ENCODE measurements at regions of chr20 and their contacts with region 1.

Region 1: DNA sequence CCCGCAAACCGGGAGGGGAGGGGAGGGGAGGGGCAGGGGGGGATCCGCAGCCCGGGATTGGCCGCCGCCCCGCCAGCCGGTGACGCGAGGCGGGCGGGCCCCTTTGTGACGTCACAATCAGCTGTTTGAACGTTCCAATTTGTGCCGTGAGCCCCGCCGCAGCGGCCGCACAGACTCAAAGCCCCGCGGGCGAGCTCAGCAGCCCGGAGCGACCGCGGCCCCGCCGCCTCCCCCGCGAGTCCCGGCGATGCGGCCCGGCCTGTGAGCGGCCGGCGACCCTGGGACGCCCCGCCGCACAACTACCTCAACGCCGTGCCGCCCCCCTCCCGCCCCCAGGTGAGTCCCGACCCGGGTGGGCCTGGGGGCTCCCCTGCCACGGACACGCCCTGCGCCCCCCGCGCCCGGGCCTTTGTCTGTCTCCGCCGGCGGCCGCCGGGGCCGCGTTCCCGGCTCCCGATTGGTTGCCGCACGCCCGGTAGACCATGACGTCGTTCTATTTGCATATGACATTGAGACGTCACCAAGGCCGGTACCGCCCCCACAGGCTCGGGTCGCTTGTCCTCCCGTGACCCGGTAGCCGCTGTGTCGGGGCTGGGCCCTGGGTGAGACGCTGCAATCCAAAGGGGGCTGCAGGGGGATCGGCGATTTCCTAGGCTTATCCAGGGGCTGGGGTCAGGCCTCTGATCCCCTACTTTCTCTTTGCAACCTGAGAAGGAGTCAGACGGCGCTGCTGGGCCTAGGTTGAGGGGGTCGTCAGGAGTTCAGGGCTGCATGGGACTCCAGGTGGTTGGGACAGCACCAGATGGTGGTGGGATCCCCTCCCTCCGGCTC is at the start of gene TP53INP2:
- DNase-seq: peak; percentile 93 to 95 (median 93)
- H3K4me3 ChIP-seq: peak within 1 kb of the TSS; percentile 49 to 82 (median 76)
- H3K4me3 Mint-ChIP-seq: peak within 1 kb of the TSS; percentile 95 to 98
- H3K27ac ChIP-seq: peak within 1 kb of the TSS; percentile 30 to 94
- H3K27ac Mint-ChIP-seq: peak within 1 kb of the TSS; percentile 93 to 97 (median 95)
- H3K4me1 ChIP-seq: peaks cover 29 to 38% of the 10 kb centered on the region in 2 donors
- H3K4me1 Mint-ChIP-seq: peaks cover 40% of the 10 kb centered on the region
- H3K27me3 ChIP-seq: peaks cover 0 to 22% of the 10 kb centered on the region in 2 donors
- H3K27me3 Mint-ChIP-seq: peaks cover 20 to 28% (median 25%) of the 10 kb centered on the region in 3 donors
- CTCF ChIP-seq: no peak
- polyA plus RNA-seq, gene TP53INP2: 0.46 to 20.6 (median 0.66) TPM

Region 2: GRCh38 chr20:34538671-34539123 is 165.7 kb before region 1 on chr20:
- intact Hi-C with region 1: loop called in 1 of 2 experiments (anchors 5 kb)
- DNase-seq: peak in 2 of 3 donors; percentile 37 to 56
- H3K4me3 ChIP-seq: no peak overlapping the region
- H3K4me3 Mint-ChIP-seq: no peak overlapping the region
- H3K27ac ChIP-seq: no peak overlapping the region
- H3K27ac Mint-ChIP-seq: peak overlapping the region in 5 of 7 donors; percentile 21 to 67 (median 33)
- H3K4me1 ChIP-seq: no peaks in the 10 kb centered on the region
- H3K4me1 Mint-ChIP-seq: no peaks in the 10 kb centered on the region
- H3K27me3 ChIP-seq: no peaks in the 10 kb centered on the region
- H3K27me3 Mint-ChIP-seq: no peaks in the 10 kb centered on the region
- CTCF ChIP-seq: peak; percentile 84

Region 3: DNA sequence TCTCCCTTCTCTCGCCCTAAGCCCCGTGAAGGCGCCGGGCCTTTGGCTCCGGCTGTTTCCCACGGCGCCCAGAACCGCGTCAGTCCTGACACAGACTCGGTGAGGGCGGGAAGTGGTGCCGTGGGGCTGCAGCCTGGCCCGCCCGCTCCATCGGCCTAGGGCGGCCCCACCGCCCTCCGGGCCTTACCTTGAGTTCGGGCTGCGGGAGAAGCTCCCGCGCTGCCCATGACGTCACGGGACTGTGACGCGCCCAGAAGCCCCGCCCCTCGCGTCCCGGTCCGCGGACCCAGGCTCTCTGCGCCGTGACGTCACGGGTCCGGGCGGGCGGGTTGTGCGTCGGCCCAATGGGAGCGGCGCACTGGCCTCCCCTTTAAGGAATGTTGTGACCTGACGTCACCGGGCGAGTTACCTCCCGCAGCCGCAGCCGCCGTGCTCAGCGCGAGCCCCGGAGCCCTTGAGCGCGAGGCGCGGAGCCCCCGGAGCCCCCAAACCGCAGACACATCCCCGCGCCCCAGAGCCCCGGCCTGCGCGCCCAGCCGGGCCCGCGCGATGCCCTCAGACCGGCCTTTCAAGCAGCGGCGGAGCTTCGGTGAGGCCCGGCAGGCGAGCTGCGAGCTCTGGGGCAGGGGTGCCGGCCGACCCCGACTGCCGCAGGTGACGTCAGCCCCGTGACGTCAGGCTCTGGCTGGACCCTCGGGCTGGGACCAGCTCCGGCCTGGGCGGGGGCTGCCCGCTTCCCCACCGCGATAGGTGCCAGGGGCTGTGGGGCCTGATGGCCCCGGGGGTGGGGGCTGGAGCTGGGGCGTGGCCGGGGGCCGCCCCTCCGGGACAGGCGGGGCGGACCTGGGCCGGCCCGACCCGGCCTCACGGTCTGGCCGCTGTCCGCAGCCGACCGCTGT is 145.8 kb before region 1 on chr20 and contains the start of gene MAP1LC3A:
- intact Hi-C with region 1: loop called (anchors 2 to 5 kb)
- DNase-seq: peak; percentile 95 to 98 (median 97)
- H3K4me3 ChIP-seq: peak within 1 kb of the TSS; percentile 75 to 85 (median 83)
- H3K4me3 Mint-ChIP-seq: peak within 1 kb of the TSS; percentile 80 to 92
- H3K27ac ChIP-seq: peak within 1 kb of the TSS in 1 of 2 donors; percentile 78
- H3K27ac Mint-ChIP-seq: peak within 1 kb of the TSS in 6 of 7 donors; percentile 83 to 94 (median 90)
- H3K4me1 ChIP-seq: peaks cover 7 to 16% of the 10 kb centered on the region in 2 donors
- H3K4me1 Mint-ChIP-seq: peaks cover 5% of the 10 kb centered on the region
- H3K27me3 ChIP-seq: no peaks in the 10 kb centered on the region
- H3K27me3 Mint-ChIP-seq: peaks cover 0 to 2% (median 0%) of the 10 kb centered on the region in 3 donors
- CTCF ChIP-seq: no peak
- polyA plus RNA-seq, gene MAP1LC3A: 2.5 to 7.7 (median 2.6) TPM

Region 4: GRCh38 chr20:34570859-34571306 is 133.5 kb before region 1 on chr20:
- intact Hi-C with region 1: no loop called
- DNase-seq: peak; percentile 12 to 79 (median 36)
- H3K4me3 ChIP-seq: no peak overlapping the region
- H3K4me3 Mint-ChIP-seq: peak overlapping the region in 1 of 2 donors; percentile 7
- H3K27ac ChIP-seq: peak overlapping the region in 1 of 2 donors; percentile 63
- H3K27ac Mint-ChIP-seq: peak overlapping the region; percentile 20 to 90 (median 61)
- H3K4me1 ChIP-seq: peaks cover 6 to 12% of the 10 kb centered on the region in 2 donors
- H3K4me1 Mint-ChIP-seq: peaks cover 11% of the 10 kb centered on the region
- H3K27me3 ChIP-seq: no peaks in the 10 kb centered on the region
- H3K27me3 Mint-ChIP-seq: no peaks in the 10 kb centered on the region
- CTCF ChIP-seq: no peak

Region 5: GRCh38 chr20:34676642-34677373 is 27.6 kb before region 1 on chr20 and contains the start of gene PIGU:
- intact Hi-C with region 1: loop called in 1 of 2 experiments (anchors 2 kb)
- DNase-seq: peak; percentile 92 to 93 (median 93)
- H3K4me3 ChIP-seq: peak within 1 kb of the TSS; percentile 80 to 92 (median 92)
- H3K4me3 Mint-ChIP-seq: peak within 1 kb of the TSS; percentile 94 to 95
- H3K27ac ChIP-seq: peak within 1 kb of the TSS; percentile 62 to 74
- H3K27ac Mint-ChIP-seq: peak within 1 kb of the TSS; percentile 76 to 98 (median 91)
- H3K4me1 ChIP-seq: peaks cover 28 to 33% of the 10 kb centered on the region in 2 donors
- H3K4me1 Mint-ChIP-seq: peaks cover 19% of the 10 kb centered on the region
- H3K27me3 ChIP-seq: no peaks in the 10 kb centered on the region
- H3K27me3 Mint-ChIP-seq: no peaks in the 10 kb centered on the region
- CTCF ChIP-seq: no peak
- polyA plus RNA-seq, gene PIGU: 5.8 to 11.3 (median 10.9) TPM

Measured in CD14-positive monocyte (primary cell).